Right ventricle myocardium inferior (tissue), 1 donor: ENCODE measurements at regions of chr1 and their contacts with region 1.

Region 1: DNA sequence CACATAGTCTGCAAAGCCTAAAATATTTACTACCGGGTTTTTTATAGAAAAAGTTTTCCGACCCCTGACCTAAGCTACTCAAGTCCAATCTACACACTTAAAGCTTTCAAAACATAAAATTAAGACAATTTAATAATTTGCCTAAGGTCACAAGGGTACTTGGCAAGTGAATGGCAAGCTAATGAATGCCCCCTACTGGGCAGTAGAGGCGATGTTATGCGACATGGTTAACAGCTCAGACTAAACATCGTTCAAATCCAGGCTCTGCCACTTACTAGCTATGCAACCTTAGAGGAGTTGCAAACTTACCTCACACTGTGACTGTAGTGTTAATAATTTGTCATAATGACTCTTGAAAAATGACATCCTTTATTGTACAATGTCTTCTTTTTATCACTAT is 317.2 kb upstream of the NFIA start:
- DNase-seq: no peak
- ATAC-seq: peak; percentile 44

Region 2: DNA sequence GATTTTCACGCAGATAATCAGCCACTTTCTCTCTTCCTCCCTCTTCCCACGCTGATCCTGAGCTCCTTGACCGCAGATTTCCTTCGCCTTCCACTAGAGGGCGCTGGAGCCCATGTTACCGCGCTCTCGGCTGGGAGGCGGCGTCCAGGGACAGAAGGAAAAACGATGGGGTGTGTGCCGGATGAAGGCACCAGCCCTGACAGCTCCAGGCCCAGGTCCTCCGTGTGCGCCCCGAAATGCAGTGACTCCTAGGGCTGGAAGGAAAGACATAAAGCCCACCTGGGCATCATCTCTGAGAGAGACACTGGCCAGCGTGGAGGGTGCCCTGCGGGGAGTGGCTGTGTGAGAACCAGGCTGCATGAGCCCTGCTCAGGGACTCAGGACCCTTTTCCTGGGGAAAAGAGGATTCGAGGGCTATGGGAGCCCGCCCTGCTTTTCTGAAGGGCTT is 793.7 kb before region 1 on chr1:
- intact Hi-C with region 1: loop called (anchors 5 kb)
- DNase-seq: peak; percentile 80
- ATAC-seq: peak; percentile 72

Region 3: GRCh38 chr1:60031146-60031545 is 734.1 kb before region 1 on chr1:
- intact Hi-C with region 1: no loop called
- DNase-seq: no peak
- ATAC-seq: no peak

Region 4: GRCh38 chr1:60281360-60281932 is 483.8 kb before region 1 on chr1:
- intact Hi-C with region 1: loop called (anchors 2 kb)
- DNase-seq: no peak
- ATAC-seq: peak; percentile 88

Region 5: DNA sequence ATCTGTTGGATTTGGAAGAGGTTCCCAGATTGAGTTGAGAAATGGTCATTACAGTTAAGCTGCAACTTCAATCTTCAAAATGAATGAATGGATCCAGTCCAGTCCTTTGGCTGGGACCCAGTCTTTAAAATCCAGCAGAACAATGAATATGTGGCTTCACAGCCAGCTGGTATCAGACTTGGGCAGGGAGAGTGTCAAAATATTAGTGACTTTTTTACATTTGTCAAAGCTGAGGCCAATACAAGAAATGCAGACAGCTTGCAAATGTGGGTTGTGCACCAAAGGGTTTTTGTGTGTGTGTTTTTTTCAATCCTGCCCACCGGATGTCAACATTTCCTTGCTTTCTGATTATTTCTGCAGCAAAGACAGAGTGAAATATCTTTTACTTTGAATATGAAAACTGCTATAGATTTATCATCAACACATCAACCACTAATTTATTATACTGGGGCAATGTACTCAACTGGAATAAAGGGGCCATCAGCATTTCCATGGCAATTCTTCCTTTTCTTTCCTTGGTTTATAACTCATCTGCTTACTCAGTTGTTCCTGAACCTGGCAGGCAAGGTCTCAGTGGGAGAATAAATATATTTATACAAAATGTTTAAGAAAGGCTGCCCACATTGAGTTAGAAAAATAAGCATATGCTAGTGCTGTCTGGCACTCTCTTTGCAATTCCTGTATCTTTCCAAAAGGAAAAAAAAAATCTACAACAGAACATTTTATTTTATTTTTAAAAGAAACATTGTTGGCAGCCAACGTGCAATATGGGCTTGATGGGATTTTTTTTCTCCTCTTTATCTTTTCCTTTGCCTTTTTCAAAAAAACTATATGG is 200.1 kb before region 1 on chr1:
- intact Hi-C with region 1: no loop called
- DNase-seq: no peak
- ATAC-seq: no peak